Activated CD4-positive, alpha-beta T cell treated with anti-CD3 and anti-CD28 coated beads, Interleukin-2, amount 10 ng/mL, durations not matched to agents 24 days and 14 days (primary cell): ENCODE measurements at regions of chr14 and their contacts with region 1.

Region 1: GRCh38 chr14:93892923-93893558 is 34.1 kb upstream of the FAM181A start:
- DNase-seq: peak; percentile 90
- H3K4me3 Mint-ChIP-seq: no peak overlapping the region
- H3K27ac Mint-ChIP-seq: no peak overlapping the region
- H3K4me1 Mint-ChIP-seq: no peaks in the 10 kb centered on the region
- H3K27me3 Mint-ChIP-seq: peaks cover 7% of the 10 kb centered on the region

Region 2: GRCh38 chr14:93648440-93649168 is 244.4 kb before region 1 on chr14:
- intact Hi-C with region 1: loop called (anchors 5 kb)
- DNase-seq: peak; percentile 61
- H3K4me3 Mint-ChIP-seq: no peak overlapping the region
- H3K27ac Mint-ChIP-seq: peak overlapping the region; percentile 56
- H3K4me1 Mint-ChIP-seq: peaks cover 15% of the 10 kb centered on the region
- H3K27me3 Mint-ChIP-seq: peaks cover 22% of the 10 kb centered on the region

Region 3: DNA sequence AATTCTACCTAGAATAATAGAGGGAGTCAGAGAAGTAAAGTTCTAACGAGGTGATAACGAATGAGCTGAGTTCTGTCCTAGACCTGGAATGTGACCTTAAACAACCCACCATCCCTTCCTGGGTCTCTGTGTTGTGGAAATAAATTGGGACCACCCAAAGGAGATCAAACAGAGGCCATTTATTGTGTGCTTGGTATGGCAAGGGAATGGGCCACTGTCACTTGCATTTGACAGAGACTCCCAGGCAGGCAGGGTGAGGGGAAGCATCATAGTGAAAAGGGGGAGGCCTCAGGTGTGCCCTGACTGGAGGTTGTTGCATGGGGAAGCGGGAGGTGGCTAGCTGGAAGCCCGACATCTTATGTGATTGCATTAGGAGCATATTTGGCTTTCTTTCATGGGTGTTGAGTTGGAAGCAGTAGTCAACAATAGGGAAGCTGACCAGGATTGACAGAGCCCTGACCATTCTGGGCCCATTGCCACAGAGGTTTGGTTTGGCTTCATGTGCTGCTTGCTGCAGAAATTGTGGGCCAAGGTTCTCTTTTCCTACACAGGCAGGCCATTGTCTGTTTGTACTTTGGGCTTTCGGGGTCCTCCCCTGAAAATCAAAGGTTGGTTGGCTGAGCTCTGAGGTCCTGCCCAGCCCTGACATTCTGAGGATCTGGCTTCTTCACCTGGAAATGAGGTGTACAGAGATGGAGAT is 16.5 kb after region 1 on chr14:
- intact Hi-C with region 1: no loop called
- DNase-seq: no peak
- H3K4me3 Mint-ChIP-seq: no peak overlapping the region
- H3K27ac Mint-ChIP-seq: no peak overlapping the region
- H3K4me1 Mint-ChIP-seq: peaks cover 3% of the 10 kb centered on the region
- H3K27me3 Mint-ChIP-seq: peaks cover 9% of the 10 kb centered on the region